CD4-positive, alpha-beta T cell (primary cell): ENCODE measurements at regions of chr1 and their contacts with region 1.

Region 1: DNA sequence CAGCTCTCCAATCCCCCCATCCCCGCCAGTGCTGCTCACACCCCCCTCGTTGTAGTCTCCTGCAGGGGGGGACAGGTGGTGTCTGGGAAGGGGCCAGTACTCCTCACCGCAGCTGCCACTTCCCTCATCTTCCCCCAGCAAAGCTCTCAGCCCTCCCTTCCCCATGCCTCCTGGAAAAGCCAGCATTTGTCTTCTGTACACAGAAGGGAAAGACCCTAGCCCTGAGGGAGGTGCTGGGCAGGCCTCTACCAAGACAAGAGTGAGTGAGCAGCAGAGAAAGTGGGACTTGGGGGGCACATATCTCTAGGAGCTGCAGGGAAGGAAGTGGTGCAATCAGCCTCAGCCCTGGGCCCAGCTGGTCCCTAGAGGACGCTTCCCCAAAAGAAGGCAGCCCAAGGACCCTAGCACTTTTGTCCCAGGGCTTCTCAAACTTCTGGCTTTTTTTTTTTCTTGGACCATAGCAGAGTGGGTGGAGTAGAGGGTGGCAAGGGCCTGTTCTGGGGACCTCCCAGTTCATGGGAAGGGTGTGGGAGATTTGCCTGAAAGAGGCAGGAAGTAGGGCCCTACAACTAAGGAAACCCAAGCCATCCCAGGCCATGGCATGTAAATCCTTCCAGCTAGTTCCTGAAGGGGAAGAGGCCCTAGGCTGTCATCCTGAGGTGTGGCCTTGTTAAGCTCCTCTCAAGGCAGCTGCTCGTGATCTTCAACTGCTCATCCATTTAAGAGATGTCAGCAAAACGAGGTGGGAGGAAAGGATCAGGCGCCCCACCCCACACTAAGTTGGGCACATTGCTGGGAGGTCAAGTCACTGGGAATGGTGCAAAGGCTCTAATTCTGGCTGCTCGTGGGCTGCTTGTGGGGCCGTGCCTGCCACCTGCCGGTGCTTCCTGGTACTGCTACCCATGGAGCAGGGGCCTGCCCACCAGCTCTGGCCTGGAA is 12.6 kb downstream of the ZC3H12A start:
- DNase-seq: peak; percentile 62 to 89 (median 76)
- ATAC-seq: peak; percentile 75
- H3K4me3 ChIP-seq: no peak overlapping the region
- H3K4me3 Mint-ChIP-seq: no peak overlapping the region
- H3K27ac ChIP-seq: peak overlapping the region; percentile 14 to 15
- H3K27ac Mint-ChIP-seq: peak overlapping the region; percentile 84
- H3K4me1 ChIP-seq: peaks cover 22% of the 10 kb centered on the region
- H3K4me1 Mint-ChIP-seq: peaks cover 24% of the 10 kb centered on the region
- H3K27me3 ChIP-seq: no peaks in the 10 kb centered on the region
- H3K27me3 Mint-ChIP-seq: no peaks in the 10 kb centered on the region
- CTCF ChIP-seq: peak; percentile 98

Region 2: DNA sequence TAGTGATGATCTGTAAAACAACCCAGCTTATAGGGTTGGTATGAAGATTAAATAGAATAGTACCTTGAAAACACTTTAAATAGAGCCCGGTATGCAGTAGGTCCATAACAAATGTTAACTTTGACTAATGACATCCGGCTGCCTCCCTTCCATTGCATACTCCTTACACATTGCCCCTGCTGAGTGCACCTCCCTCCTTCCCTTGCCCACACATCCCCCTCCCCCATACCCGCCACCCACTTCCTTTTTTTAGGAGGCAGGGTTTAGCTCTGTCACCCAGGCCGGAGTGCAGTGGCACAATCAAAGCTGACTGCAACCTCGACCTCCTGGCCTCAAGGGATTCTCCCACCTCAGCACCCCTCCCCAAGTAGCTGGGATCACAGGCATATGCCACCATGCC is 37.0 kb before region 1 on chr1:
- CTCF ChIA-PET with region 1: interaction called, 120 read pairs
- POLR2A ChIA-PET with region 1: interaction called, 17 read pairs
- intact Hi-C with region 1: loop called (anchors 1 kb)
- DNase-seq: peak in 7 of 14 experiments; percentile 30 to 64 (median 40)
- ATAC-seq: peak; percentile 78
- H3K4me3 ChIP-seq: no peak overlapping the region
- H3K4me3 Mint-ChIP-seq: no peak overlapping the region
- H3K27ac ChIP-seq: no peak overlapping the region
- H3K27ac Mint-ChIP-seq: no peak overlapping the region
- H3K4me1 ChIP-seq: peaks cover 14% of the 10 kb centered on the region
- H3K4me1 Mint-ChIP-seq: peaks cover 18% of the 10 kb centered on the region
- H3K27me3 ChIP-seq: no peaks in the 10 kb centered on the region
- H3K27me3 Mint-ChIP-seq: no peaks in the 10 kb centered on the region
- CTCF ChIP-seq: no peak

Region 3: DNA sequence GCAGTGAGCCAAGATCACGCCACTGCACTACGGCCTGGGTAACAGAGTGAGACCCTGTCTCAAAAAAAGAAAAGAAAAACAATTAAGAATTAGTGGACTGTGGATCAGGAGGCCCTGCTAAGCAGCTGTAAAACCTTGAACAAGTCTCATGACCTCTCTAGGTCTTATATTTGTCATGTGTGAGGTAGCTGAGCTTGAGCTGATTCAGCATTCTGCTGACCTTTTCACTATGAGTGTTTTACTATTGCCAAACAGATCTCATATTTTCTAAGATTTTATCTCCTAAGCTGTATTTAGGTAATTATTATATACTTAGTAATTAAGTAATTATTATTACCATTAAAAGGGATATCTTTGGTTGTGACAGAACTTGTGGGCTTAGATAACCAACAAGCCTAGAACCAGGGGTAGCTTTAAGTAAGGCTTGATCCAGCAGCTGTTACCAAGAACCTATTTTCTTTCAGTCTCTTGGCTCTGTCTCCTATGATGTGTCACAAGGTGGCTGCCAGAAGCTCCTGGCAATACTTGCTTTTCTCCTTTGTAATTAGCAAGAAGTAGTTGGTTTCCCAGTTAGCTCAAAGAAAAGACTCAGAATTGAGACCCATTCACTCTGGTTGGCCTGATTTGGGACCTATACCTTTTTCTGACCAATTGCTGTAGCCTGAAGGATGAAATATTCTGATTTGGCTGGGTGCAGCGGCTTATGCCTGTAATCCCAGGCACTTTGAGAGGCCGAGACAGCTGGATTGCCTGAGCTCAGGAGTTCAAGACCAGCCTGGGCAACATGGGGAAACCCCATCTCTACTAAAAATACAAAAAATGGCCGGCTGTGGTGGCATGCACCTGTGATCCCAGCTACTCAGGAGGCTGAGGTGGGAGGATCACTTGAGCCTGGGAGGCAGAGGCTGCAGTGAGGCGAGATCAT is 21.1 kb before region 1 on chr1:
- CTCF ChIA-PET with region 1: interaction called, 120 read pairs
- POLR2A ChIA-PET with region 1: interaction called, 136 read pairs
- intact Hi-C with region 1: no loop called
- DNase-seq: no peak
- ATAC-seq: no peak
- H3K4me3 ChIP-seq: no peak overlapping the region
- H3K4me3 Mint-ChIP-seq: no peak overlapping the region
- H3K27ac ChIP-seq: no peak overlapping the region
- H3K27ac Mint-ChIP-seq: no peak overlapping the region
- H3K4me1 ChIP-seq: no peaks in the 10 kb centered on the region
- H3K4me1 Mint-ChIP-seq: peaks cover 6% of the 10 kb centered on the region
- H3K27me3 ChIP-seq: no peaks in the 10 kb centered on the region
- H3K27me3 Mint-ChIP-seq: no peaks in the 10 kb centered on the region
- CTCF ChIP-seq: no peak

Region 4: DNA sequence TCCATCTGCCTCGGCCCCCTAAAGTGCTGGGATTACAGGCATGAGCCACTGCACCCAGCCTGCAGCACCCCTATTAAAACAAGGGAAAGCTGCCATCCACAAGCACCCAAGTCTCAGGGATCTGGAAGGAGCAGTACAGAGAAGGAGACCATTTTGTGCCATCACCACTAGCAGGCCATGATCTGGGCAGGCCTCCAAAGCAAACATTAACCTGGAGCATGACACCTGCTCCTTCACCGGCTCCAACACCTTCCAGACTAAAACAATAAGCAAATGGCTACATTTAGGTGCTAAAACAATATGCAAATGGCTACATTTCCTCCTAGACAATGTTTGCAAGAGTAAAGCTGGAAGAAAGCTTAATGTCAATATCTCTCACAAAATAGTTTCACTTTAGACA is 10.9 kb after region 1 on chr1:
- CTCF ChIA-PET with region 1: interaction called, 14 read pairs
- POLR2A ChIA-PET with region 1: interaction called, 4 read pairs
- intact Hi-C with region 1: no loop called
- DNase-seq: no peak
- ATAC-seq: no peak
- H3K4me3 ChIP-seq: no peak overlapping the region
- H3K4me3 Mint-ChIP-seq: no peak overlapping the region
- H3K27ac ChIP-seq: no peak overlapping the region
- H3K27ac Mint-ChIP-seq: no peak overlapping the region
- H3K4me1 ChIP-seq: no peaks in the 10 kb centered on the region
- H3K4me1 Mint-ChIP-seq: peaks cover 28% of the 10 kb centered on the region
- H3K27me3 ChIP-seq: no peaks in the 10 kb centered on the region
- H3K27me3 Mint-ChIP-seq: no peaks in the 10 kb centered on the region
- CTCF ChIP-seq: no peak

Region 5: GRCh38 chr1:37514350-37515184 is 27.6 kb after region 1 on chr1 and contains the start of gene MEAF6:
- CTCF ChIA-PET with region 1: interaction called, 13 read pairs
- POLR2A ChIA-PET with region 1: interaction called, 18 read pairs
- intact Hi-C with region 1: no loop called
- DNase-seq: peak; percentile 72 to 93 (median 80)
- ATAC-seq: peak; percentile 95
- H3K4me3 ChIP-seq: peak within 1 kb of the TSS; percentile 86
- H3K4me3 Mint-ChIP-seq: peak within 1 kb of the TSS; percentile 97
- H3K27ac ChIP-seq: peak within 1 kb of the TSS; percentile 79 to 95
- H3K27ac Mint-ChIP-seq: peak within 1 kb of the TSS; percentile 95
- H3K4me1 ChIP-seq: peaks cover 22% of the 10 kb centered on the region
- H3K4me1 Mint-ChIP-seq: peaks cover 46% of the 10 kb centered on the region
- H3K27me3 ChIP-seq: no peaks in the 10 kb centered on the region
- H3K27me3 Mint-ChIP-seq: no peaks in the 10 kb centered on the region
- CTCF ChIP-seq: peak; percentile 75
- total RNA-seq, gene MEAF6: 39.0 to 41.5 TPM